ENCODE measurements at regions of chr2 and their contacts with region 1.

Region 1: DNA sequence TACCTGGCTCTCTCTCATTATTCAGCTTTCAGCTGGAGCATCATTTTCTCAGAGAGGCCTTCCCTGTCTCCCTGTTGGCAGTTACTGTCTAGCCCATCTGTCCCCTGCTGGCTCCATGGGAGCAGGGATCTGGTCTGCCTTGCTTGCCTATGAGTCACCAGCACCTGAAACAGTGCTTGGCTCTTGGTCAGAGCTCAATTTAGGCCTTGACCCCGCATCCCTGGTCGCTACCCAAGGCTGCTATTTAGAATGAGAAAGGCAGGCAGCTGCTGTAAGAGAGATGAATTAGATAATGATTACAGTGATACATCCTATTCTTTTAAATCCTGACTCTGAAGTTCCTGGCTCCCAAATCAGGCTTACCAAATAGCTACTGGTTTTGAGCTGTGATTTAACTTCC is 32.9 kb downstream of the KCNE4 start:
- DNase-seq: peak in 1 of 2 donors; percentile 45
- ATAC-seq: peak in 6 of 8 donors; percentile 59 to 97 (median 78)
- H3K4me3 ChIP-seq: no peak overlapping the region
- H3K27ac ChIP-seq: no peak overlapping the region
- H3K4me1 ChIP-seq: peaks cover 0 to 7% (median 0%) of the 10 kb centered on the region in 9 donors
- H3K27me3 ChIP-seq: no peaks in the 10 kb centered on the region
- CTCF ChIP-seq: peak in 1 of 9 donors; percentile 15

Region 2: GRCh38 chr2:222548992-222549391 is 535.9 kb before region 1 on chr2:
- intact Hi-C with region 1: loop called in 1 of 10 experiments (anchors 10 kb)
- DNase-seq: no peak
- ATAC-seq: no peak
- H3K4me3 ChIP-seq: no peak overlapping the region
- H3K27ac ChIP-seq: no peak overlapping the region
- H3K4me1 ChIP-seq: peaks cover 0 to 5% (median 0%) of the 10 kb centered on the region in 9 donors
- H3K27me3 ChIP-seq: peaks cover 0 to 27% (median 7%) of the 10 kb centered on the region in 7 donors
- CTCF ChIP-seq: no peak

Region 3: GRCh38 chr2:222912117-222912516 is 172.8 kb before region 1 on chr2:
- intact Hi-C with region 1: no loop called
- DNase-seq: no peak
- ATAC-seq: peak in 5 of 8 donors; percentile 17 to 72 (median 43)
- H3K4me3 ChIP-seq: no peak overlapping the region
- H3K27ac ChIP-seq: peak overlapping the region in 1 of 10 donors; percentile 48
- H3K4me1 ChIP-seq: peaks cover under 1 to 44% (median 28%) of the 10 kb centered on the region in 9 donors
- H3K27me3 ChIP-seq: no peaks in the 10 kb centered on the region
- CTCF ChIP-seq: no peak

Measured in heart right ventricle (tissue), 16 donors.